ENCODE measurements at regions of chr1 and their contacts with region 1.

Region 1: DNA sequence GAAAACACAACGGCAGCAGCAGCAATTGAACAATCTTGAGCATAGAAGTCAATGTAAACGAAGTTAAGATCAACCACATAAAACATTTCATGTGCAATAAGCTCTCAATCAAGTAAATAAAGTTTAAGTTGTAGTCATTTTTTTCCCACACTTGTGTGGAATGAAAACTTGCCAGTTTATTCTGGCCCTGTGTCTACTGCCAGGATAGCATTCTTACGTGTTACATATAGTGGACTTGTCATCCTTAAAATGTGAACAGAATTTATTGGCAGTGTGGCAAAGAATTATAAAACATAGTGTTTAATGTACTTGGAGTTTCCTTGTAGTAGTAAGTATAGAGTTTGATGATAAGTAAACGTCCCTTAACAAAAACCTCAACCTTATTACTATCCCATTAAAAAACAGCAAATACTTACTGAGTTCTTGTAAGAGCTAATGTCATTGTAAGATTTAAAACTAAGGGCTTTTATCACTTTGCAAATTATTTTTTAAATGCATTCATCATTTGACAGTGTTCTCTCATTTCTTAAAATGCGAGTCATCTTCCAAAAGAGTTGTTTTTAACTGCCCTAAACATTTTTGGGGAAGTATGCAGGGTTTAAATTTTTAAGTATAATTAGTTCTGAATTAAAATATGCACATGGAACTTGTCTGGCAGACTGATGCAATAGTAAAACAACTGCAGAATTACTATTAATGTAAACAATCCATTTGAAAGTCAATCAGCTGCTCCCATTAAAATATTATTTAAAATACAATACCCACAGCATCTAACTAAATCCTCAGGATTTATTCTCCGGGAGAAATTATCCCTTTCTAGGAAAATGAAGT is 7.9 kb downstream of the COX20 start:
- DNase-seq: no peak
- H3K4me3 ChIP-seq: no peak overlapping the region
- H3K27ac ChIP-seq: no peak overlapping the region
- H3K27me3 ChIP-seq: no peaks in the 10 kb centered on the region
- CTCF ChIP-seq: no peak

Region 2: GRCh38 chr1:244874974-244875579 is 31.7 kb after region 1 on chr1:
- CTCF ChIA-PET with region 1: interaction called, 10 read pairs
- POLR2A ChIA-PET with region 1: no interaction called
- DNase-seq: no peak
- H3K4me3 ChIP-seq: no peak overlapping the region
- H3K27ac ChIP-seq: no peak overlapping the region
- H3K27me3 ChIP-seq: no peaks in the 10 kb centered on the region
- CTCF ChIP-seq: no peak

Measured in AG04450 (cell line).